ENCODE measurements at regions of chr16 and their contacts with region 1.

Region 1: DNA sequence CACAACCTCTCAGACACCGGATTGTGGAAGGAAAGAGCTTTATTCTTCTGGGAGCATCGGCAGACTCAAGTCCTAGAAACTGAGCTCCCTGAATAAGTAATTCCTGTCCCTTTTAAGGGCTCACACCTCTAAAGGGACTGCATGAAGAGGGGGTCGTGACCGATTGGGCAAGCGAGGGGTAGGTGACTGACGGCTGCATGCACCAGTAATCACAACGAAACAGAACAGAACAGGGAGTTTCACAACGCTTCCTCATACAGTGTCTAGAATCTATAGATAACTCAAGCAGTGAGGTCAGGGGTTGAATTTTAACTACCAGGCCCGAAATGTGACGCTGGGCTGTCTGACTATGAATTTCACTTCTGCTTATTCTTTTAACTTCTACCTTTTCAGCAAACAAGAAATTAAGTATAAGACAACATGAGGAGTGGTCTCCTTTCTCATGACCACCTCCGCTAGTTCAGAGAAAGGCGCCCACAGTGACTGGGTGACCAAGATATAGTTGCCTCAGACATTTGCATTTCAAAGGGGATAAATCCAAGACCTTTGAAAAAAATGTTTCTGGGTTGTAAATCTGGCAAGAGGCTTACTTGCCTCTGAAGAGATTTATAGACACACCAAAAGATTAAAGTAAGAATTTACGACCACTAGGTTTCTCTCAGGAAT is 88.4 kb upstream of the ATF7IP2 start:
- DNase-seq: peak in 3 of 5 donors; percentile 52 to 71 (median 65)
- H3K4me3 ChIP-seq: no peak overlapping the region
- H3K27ac ChIP-seq: no peak overlapping the region
- H3K4me1 ChIP-seq: no peaks in the 10 kb centered on the region
- H3K27me3 ChIP-seq: no peaks in the 10 kb centered on the region
- CTCF ChIP-seq: no peak

Region 2: GRCh38 chr16:10339777-10340732 is 42.6 kb after region 1 on chr16:
- intact Hi-C with region 1: loop called (anchors 10 kb)
- DNase-seq: no peak
- H3K4me3 ChIP-seq: no peak overlapping the region
- H3K27ac ChIP-seq: no peak overlapping the region
- H3K4me1 ChIP-seq: no peaks in the 10 kb centered on the region
- H3K27me3 ChIP-seq: no peaks in the 10 kb centered on the region
- CTCF ChIP-seq: no peak

Measured in kidney (tissue), 22 donors.